ENCODE measurements at regions of chr11 and their contacts with region 1.

Region 1: DNA sequence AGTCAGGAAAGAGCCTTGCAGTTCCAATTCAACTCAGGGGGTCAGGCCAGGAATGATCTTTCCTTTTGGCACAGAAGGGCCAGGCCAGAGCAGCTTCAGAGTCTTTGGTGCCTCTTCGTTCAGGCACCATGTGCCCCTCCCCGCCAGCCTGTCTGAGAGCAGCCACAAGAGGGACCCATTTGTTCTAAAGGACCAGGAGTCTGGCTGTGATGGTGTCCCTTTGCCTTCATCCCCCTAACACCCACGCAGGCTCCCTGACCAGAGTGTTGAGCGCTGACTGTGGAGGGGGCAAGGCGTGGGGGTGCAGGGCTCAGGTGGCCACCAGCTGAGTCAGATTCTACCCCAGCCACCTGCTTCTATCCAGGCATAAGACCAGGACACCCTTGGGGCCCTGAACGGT is 156.4 kb downstream of the TTC17 start:
- DNase-seq: peak in 1 of 2 experiments; percentile 63
- H3K4me3 ChIP-seq: no peak overlapping the region
- H3K27ac ChIP-seq: no peak overlapping the region
- H3K4me1 ChIP-seq: peaks cover 0 to 5% (median 0%) of the 10 kb centered on the region in 4 experiments; a peak in 1 of 7 replicates
- H3K27me3 ChIP-seq: peaks cover 0 to 4% (median 0%) of the 10 kb centered on the region in 4 experiments; a peak in 1 of 7 replicates
- CTCF ChIP-seq: peak; percentile 55 to 65 (median 62)
- EP300 ChIP-seq: no peak
- POLR2A ChIP-seq: no peak
- RAD21 ChIP-seq: peak; percentile 51 to 65; a peak in 3 of 4 replicates

Region 2: GRCh38 chr11:43497144-43497543 is 17.9 kb before region 1 on chr11:
- CTCF ChIA-PET with region 1: interaction called, 15 read pairs
- POLR2A ChIA-PET with region 1: no interaction called
- DNase-seq: no peak
- H3K4me3 ChIP-seq: no peak overlapping the region
- H3K27ac ChIP-seq: no peak overlapping the region
- H3K4me1 ChIP-seq: no peaks in the 10 kb centered on the region
- H3K27me3 ChIP-seq: no peaks in the 10 kb centered on the region
- CTCF ChIP-seq: no peak
- EP300 ChIP-seq: no peak
- POLR2A ChIP-seq: no peak
- RAD21 ChIP-seq: no peak

Region 3: GRCh38 chr11:43532041-43532440 is 17.0 kb after region 1 on chr11:
- CTCF ChIA-PET with region 1: interaction called, 13 read pairs
- POLR2A ChIA-PET with region 1: no interaction called
- DNase-seq: no peak
- H3K4me3 ChIP-seq: no peak overlapping the region
- H3K27ac ChIP-seq: no peak overlapping the region
- H3K4me1 ChIP-seq: no peaks in the 10 kb centered on the region
- H3K27me3 ChIP-seq: no peaks in the 10 kb centered on the region
- CTCF ChIP-seq: no peak
- EP300 ChIP-seq: no peak
- POLR2A ChIP-seq: no peak
- RAD21 ChIP-seq: no peak

Region 4: DNA sequence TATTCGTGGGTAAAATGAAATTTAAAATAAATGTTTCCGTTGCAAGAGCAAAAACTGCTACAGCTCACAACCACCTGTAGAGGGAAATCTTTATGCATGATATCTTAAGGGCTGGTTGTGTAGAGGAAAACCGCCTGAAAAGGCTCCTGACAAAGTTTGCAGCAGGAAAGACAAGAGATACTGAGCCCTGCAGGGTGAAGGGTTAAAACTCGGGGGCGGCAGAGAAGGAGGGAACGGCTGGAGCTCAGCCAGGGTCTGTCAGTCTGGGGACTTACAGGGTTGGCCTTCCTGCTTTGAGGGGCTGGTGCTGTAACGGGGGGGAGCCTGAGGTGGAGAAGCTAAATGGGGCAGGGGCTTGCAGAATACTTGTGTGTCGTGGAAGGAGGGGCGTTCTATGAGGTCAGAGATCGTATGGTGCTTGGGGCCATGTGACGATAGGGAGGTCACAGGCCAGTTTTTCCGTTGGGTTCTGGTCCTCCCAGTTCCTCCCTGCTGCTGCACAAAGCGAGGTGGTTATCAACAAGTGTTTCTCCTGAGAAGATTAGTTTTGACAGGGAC is 42.5 kb after region 1 on chr11:
- CTCF ChIA-PET with region 1: interaction called, 1,064 read pairs
- POLR2A ChIA-PET with region 1: no interaction called
- DNase-seq: peak in 1 of 2 experiments; percentile 64
- H3K4me3 ChIP-seq: peak overlapping the region; percentile 34 to 58 (median 48); a peak in 7 of 8 replicates
- H3K27ac ChIP-seq: no peak overlapping the region
- H3K4me1 ChIP-seq: peaks cover 5 to 26% (median 15%) of the 10 kb centered on the region in 4 experiments; a peak in 6 of 7 replicates
- H3K27me3 ChIP-seq: peaks cover 2 to 7% (median 4%) of the 10 kb centered on the region in 4 experiments; a peak in 4 of 7 replicates
- CTCF ChIP-seq: peak in 2 of 3 experiments; percentile 16 to 22; a peak in 3 of 4 replicates
- EP300 ChIP-seq: no peak
- POLR2A ChIP-seq: no peak
- RAD21 ChIP-seq: peak in 1 of 2 experiments; percentile 32; a peak in 2 of 4 replicates

Measured in H1 (cell line).